GM10248 (cell line): ENCODE measurements at regions of chr10 and their contacts with region 1.

Region 1: GRCh38 chr10:96319754-96320474 is 15.7 kb downstream of the DNTT start:
- DNase-seq: no peak
- CTCF ChIP-seq: no peak

Region 2: GRCh38 chr10:96271016-96271829 is 48.7 kb before region 1 on chr10 and contains the start of gene BLNK:
- CTCF ChIA-PET with region 1: no interaction called
- POLR2A ChIA-PET with region 1: no interaction called
- DNase-seq: peak; percentile 76
- CTCF ChIP-seq: no peak

Region 3: DNA sequence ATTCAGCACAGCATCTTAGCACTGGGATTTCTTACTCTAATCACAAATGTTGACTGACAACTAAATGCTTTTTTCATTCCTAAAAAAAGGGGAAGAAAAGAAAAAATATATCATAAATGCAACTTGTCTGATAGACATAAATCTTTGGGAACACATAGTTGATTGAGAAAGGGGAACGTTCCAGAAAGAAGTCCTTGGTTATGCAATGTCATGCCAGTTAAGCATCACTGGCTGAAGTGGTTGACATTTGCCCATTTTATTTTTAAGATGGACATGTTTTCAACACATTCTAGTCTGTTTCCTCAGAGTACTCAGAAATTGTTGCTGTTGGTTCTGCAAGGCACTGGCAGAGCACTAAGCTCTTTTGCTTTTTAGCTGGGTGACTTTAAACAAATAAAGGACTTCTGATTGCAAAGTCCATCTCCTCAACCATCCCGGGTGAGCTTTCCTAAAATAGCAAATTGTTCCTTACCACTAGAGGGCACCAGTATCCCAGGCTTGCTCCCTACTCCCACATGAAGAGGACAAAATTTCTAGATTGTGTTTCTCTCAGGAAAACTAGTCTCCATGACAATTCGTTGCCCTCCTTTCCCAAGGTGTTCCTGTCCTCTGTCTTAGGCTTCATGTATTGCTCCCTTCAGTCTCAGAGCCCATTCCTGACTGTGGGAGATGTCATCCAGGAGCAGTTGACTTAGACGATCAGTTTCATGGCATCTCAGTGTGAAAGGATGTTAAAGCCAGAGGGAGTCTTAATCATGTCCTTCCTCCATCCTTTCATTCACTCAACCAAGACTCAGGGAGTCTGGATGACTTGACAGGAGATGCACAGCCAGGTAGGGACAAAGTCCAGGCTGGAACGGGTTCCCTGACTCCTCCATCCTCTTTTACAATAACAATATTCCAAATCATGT is 15.0 kb after region 1 on chr10:
- CTCF ChIA-PET with region 1: interaction called, 15 read pairs
- POLR2A ChIA-PET with region 1: no interaction called
- DNase-seq: peak; percentile 19
- CTCF ChIP-seq: peak; percentile 59